ENCODE measurements at regions of chr17 and their contacts with region 1.

Region 1: GRCh38 chr17:6666077-6666521 is 14.5 kb downstream of the C17orf100 start:
- DNase-seq: peak; percentile 78
- ATAC-seq: peak; percentile 94
- H3K4me3 ChIP-seq: no peak overlapping the region
- H3K27ac ChIP-seq: no peak overlapping the region
- H3K4me1 ChIP-seq: peaks cover 46% of the 10 kb centered on the region
- H3K27me3 ChIP-seq: no peaks in the 10 kb centered on the region
- CTCF ChIP-seq: peak; percentile 98
- EP300 ChIP-seq: no peak
- POLR2A ChIP-seq: no peak
- RAD21 ChIP-seq: peak; percentile 95

Region 2: DNA sequence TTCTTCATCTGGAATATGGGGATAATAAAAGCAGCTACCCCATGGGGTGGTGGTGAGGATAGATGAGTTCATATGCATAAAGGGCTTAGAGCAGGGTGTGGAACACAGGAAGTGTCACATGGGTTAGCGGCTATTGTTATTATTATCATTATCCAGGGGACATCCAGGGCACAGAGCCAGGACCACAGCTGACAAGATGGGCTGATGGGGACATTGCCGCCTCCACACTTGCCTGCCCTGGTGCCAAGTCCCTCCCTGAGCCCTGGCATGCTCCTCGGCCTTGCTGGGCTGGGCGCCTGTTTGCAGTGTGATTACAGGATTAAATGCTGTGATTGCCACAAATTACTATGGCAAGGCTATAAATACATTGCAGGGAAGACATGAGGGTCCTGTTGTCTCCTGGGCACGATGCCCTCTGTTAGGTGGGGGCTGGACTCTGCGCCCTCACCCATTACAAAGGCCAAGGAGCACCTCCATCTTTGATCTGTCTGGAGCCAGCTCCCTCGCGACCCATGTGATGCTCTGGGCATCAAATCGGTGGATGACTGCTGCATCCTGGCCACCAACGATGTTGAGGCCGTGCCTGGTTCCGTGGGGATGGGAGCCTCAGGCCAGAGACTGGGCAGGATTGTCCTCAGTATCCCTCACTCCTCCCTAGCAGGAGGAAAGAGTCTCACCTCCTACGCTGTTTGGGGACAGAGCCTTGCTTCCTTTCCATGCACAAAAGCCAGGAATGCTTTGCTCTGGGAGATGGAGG is 178.7 kb before region 1 on chr17:
- CTCF ChIA-PET with region 1: no interaction called
- POLR2A ChIA-PET with region 1: no interaction called
- in situ Hi-C with region 1: no loop called
- intact Hi-C with region 1: no loop called
- DNase-seq: no peak
- ATAC-seq: no peak
- H3K4me3 ChIP-seq: no peak overlapping the region
- H3K27ac ChIP-seq: no peak overlapping the region
- H3K4me1 ChIP-seq: no peaks in the 10 kb centered on the region
- H3K27me3 ChIP-seq: peaks cover 1 to 15% of the 10 kb centered on the region in 2 experiments; a peak in 1 of 5 replicates
- CTCF ChIP-seq: no peak
- EP300 ChIP-seq: no peak
- POLR2A ChIP-seq: no peak
- RAD21 ChIP-seq: no peak

Region 3: GRCh38 chr17:6686026-6686425 is 19.9 kb after region 1 on chr17:
- CTCF ChIA-PET with region 1: no interaction called
- POLR2A ChIA-PET with region 1: interaction called, 4 read pairs
- in situ Hi-C with region 1: no loop called
- intact Hi-C with region 1: loop called (anchors 2 kb)
- DNase-seq: no peak
- ATAC-seq: no peak
- H3K4me3 ChIP-seq: no peak overlapping the region
- H3K27ac ChIP-seq: no peak overlapping the region
- H3K4me1 ChIP-seq: peaks cover 52% of the 10 kb centered on the region
- H3K27me3 ChIP-seq: no peaks in the 10 kb centered on the region
- CTCF ChIP-seq: no peak
- EP300 ChIP-seq: no peak
- POLR2A ChIP-seq: no peak
- RAD21 ChIP-seq: no peak

Region 4: GRCh38 chr17:6713130-6713917 is 47.2 kb after region 1 on chr17 and contains the start of gene SLC13A5:
- CTCF ChIA-PET with region 1: interaction called, 52 read pairs
- POLR2A ChIA-PET with region 1: interaction called, 29 read pairs
- in situ Hi-C with region 1: loop called (anchors 5 kb)
- intact Hi-C with region 1: loop called (anchors 1 kb)
- DNase-seq: peak; percentile 87
- ATAC-seq: peak; percentile 90
- H3K4me3 ChIP-seq: peak within 1 kb of the TSS; percentile 60 to 84 (median 84)
- H3K27ac ChIP-seq: peak within 1 kb of the TSS; percentile 74
- H3K4me1 ChIP-seq: peaks cover 61% of the 10 kb centered on the region
- H3K27me3 ChIP-seq: no peaks in the 10 kb centered on the region; a peak in 1 of 5 replicates
- CTCF ChIP-seq: peak; percentile 90
- EP300 ChIP-seq: peak in 1 of 2 experiments; percentile 59; a peak in 1 of 4 replicates
- POLR2A ChIP-seq: peak; percentile 96 to 100
- RAD21 ChIP-seq: peak; percentile 92
- total RNA-seq, gene SLC13A5: 24.4 and 42.8 TPM in 2 replicates

Region 5: GRCh38 chr17:6729531-6729930 is 63.4 kb after region 1 on chr17:
- CTCF ChIA-PET with region 1: no interaction called
- POLR2A ChIA-PET with region 1: no interaction called
- in situ Hi-C with region 1: no loop called
- intact Hi-C with region 1: no loop called
- DNase-seq: no peak
- ATAC-seq: peak; percentile 28; the same call in 1 of the 3 replicates
- H3K4me3 ChIP-seq: no peak overlapping the region
- H3K27ac ChIP-seq: no peak overlapping the region
- H3K4me1 ChIP-seq: peaks cover 19% of the 10 kb centered on the region
- H3K27me3 ChIP-seq: peaks cover 0 to 1% of the 10 kb centered on the region in 2 experiments; a peak in 2 of 5 replicates
- CTCF ChIP-seq: no peak
- EP300 ChIP-seq: no peak
- POLR2A ChIP-seq: no peak
- RAD21 ChIP-seq: no peak

Region 6: DNA sequence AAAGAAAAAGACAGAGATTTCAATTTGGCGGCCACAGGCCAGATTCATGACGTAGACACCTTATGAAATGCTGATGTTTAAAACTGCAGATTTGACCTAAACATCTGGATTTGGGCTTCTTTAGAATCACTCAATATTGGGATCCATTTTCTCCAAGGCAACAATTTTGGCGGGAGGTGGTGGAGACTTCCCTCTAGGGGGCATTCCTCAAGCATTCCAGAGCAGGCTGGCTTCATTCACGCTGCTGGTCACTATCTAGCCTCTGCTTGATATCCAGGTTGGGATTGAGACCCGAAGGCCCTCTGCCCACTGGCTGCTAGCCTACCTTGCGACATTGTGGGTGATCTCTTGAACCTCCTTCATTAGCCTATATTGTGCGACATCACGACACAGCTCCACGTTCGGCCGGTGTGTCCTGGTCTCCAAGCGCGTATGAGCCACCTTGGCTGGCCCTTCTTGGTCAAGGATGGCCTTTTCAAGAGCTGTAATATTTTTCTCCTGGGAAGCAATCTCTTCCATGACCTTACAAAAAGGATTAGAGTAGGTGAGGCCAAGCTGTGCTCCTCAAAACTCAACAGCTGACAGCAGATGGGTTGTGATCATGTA is 134.4 kb after region 1 on chr17:
- CTCF ChIA-PET with region 1: no interaction called
- POLR2A ChIA-PET with region 1: no interaction called
- in situ Hi-C with region 1: no loop called
- intact Hi-C with region 1: no loop called
- DNase-seq: no peak
- ATAC-seq: no peak
- H3K4me3 ChIP-seq: no peak overlapping the region
- H3K27ac ChIP-seq: no peak overlapping the region
- H3K4me1 ChIP-seq: peaks cover 35% of the 10 kb centered on the region
- H3K27me3 ChIP-seq: no peaks in the 10 kb centered on the region
- CTCF ChIP-seq: no peak
- EP300 ChIP-seq: no peak
- POLR2A ChIP-seq: no peak
- RAD21 ChIP-seq: no peak

Region 7: GRCh38 chr17:6843241-6843880 is 177.3 kb after region 1 on chr17:
- CTCF ChIA-PET with region 1: interaction called, 16 read pairs
- POLR2A ChIA-PET with region 1: no interaction called
- in situ Hi-C with region 1: loop called (anchors 10 kb)
- intact Hi-C with region 1: loop called (anchors 2 kb)
- DNase-seq: peak; percentile 54
- ATAC-seq: no peak
- H3K4me3 ChIP-seq: no peak overlapping the region
- H3K27ac ChIP-seq: no peak overlapping the region
- H3K4me1 ChIP-seq: peaks cover 8% of the 10 kb centered on the region; the same call in 1 of the 2 replicates
- H3K27me3 ChIP-seq: peaks cover 0 to 1% of the 10 kb centered on the region in 2 experiments; a peak in 1 of 5 replicates
- CTCF ChIP-seq: peak; percentile 54
- EP300 ChIP-seq: no peak
- POLR2A ChIP-seq: no peak
- RAD21 ChIP-seq: no peak

Measured in HepG2 (cell line).